OCI-LY7 (cell line): ENCODE measurements at regions of chr7 and their contacts with region 1.

Region 1: DNA sequence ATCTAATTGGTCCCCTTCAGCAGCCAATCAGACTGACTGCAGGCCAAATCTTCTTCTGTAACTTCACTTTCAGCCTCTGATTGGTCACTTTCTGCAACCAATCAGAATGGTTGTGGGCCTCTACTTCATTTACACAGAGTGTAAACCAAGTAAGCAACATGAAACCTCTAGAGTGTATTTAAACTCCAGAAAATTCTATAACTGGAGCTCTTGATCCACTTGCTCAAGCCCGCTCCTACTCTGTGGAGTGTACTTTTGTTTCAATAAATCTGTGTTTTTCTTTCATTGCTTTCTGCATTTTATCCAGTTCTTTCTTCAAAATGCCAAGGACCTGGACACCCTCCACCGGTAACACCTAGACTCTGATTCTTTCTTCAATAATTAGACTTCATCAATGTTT is 319.1 kb downstream of the CACNA2D1 start:
- DNase-seq: no peak
- H3K4me3 ChIP-seq: no peak overlapping the region
- H3K27ac ChIP-seq: no peak overlapping the region
- H3K4me1 ChIP-seq: no peaks in the 10 kb centered on the region
- CTCF ChIP-seq: no peak

Region 2: DNA sequence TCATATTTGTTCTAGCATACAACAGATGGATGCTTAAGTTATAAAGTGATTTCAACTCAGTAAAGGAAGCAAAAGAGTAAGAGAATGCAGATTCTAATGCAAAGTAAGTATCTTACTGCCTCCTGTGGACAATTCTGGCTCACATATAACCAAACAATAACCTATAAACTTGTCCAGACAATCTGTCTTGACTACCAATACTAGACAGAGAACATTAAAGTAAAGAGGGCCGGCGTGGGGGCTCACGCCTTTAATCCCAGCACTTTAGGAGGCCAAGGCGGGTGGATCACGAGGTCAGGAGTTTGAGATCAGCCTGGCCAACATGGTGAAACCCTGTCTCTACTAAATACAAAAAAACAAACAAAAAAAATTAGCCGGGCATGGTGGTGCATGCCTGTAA is 10.2 kb before region 1 on chr7:
- CTCF ChIA-PET with region 1: no interaction called
- POLR2A ChIA-PET with region 1: interaction called, 11 read pairs
- intact Hi-C with region 1: no loop called
- DNase-seq: no peak
- H3K4me3 ChIP-seq: no peak overlapping the region
- H3K27ac ChIP-seq: no peak overlapping the region
- H3K4me1 ChIP-seq: no peaks in the 10 kb centered on the region
- CTCF ChIP-seq: no peak